ENCODE measurements at regions of chr11 and their contacts with region 1.

Region 1: GRCh38 chr11:18105802-18106574 is at the start of gene SAAL1:
- DNase-seq: peak; percentile 84 to 87
- H3K4me3 ChIP-seq: peak within 1 kb of the TSS; percentile 64 to 98 (median 73)
- H3K27ac ChIP-seq: peak within 1 kb of the TSS in 1 of 3 donors; percentile 60
- H3K4me1 ChIP-seq: peaks cover 0 to 10% of the 10 kb centered on the region in 2 donors
- H3K27me3 ChIP-seq: no peaks in the 10 kb centered on the region
- CTCF ChIP-seq: peak in 5 of 6 experiments; percentile 39 to 74 (median 48)
- POLR2A ChIP-seq: peak in 1 of 2 donors; percentile 52
- total RNA-seq, gene SAAL1: 8.1 to 14.3 (median 12.4) TPM

Region 2: DNA sequence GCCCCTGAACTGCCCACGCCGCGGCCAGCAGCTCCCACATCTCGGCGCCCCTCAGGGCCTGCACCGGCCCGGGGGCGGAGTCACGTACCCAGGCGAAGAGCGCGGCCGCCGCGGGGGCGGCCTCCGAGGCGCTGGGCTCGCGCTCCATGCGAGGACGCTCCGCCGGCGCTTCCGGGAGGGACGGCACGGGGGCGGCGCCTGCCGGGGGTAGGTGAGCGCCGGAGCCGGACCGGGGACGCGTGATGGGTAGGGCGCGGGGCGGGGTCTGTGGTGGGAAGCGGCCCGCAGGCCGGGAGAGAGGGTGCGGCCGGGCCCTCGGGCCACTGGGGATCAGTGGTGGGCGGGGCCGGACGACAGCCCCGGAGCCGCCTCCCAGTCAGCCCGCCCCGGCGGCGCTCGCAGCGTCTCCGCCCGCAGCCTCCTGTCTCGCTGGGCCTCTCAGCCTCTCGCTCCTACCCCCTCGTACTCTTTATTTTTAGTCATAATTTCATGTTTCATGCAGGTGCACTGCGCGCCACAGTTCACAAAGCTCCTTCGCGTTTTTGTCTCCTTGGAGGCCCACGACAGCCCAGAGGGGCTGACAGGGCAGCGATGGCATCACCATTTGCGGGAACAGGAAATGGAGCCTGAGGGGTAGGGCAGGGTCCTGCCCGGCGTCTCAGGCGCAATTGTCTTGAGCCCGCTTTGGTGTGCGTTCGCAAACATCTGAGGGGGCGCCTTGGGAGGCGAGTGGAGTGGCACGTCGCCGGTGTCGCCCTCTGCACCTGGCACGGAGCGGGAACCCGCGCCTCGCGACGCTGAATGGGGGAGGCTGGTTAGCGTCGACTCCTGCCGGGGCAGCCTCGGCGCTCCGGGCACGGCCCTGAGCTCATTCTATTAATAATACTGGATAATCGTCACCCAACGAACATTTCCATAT is 92.9 kb before region 1 on chr11 and contains the start of gene SERGEF:
- intact Hi-C with region 1: loop called (anchors 10 kb)
- DNase-seq: peak; percentile 97 to 98
- H3K4me3 ChIP-seq: peak within 1 kb of the TSS; percentile 68 to 93 (median 89)
- H3K27ac ChIP-seq: peak within 1 kb of the TSS; percentile 65 to 84 (median 72)
- H3K4me1 ChIP-seq: peaks cover 8 to 18% of the 10 kb centered on the region in 2 donors
- H3K27me3 ChIP-seq: no peaks in the 10 kb centered on the region
- CTCF ChIP-seq: peak in 2 of 6 experiments; percentile 29 to 45
- POLR2A ChIP-seq: peak in 1 of 2 donors; percentile 80
- total RNA-seq, gene SERGEF: 62.2 to 116 (median 83.5) TPM

Region 3: GRCh38 chr11:18225913-18226312 is 119.9 kb after region 1 on chr11:
- intact Hi-C with region 1: no loop called
- DNase-seq: no peak
- H3K4me3 ChIP-seq: no peak overlapping the region
- H3K27ac ChIP-seq: no peak overlapping the region
- H3K4me1 ChIP-seq: no peaks in the 10 kb centered on the region
- H3K27me3 ChIP-seq: no peaks in the 10 kb centered on the region
- CTCF ChIP-seq: no peak
- POLR2A ChIP-seq: no peak